ENCODE measurements at regions of chr7 and their contacts with region 1.

Region 1: GRCh38 chr7:52482076-52482475 is 553.4 kb upstream of the POM121L12 start:
- DNase-seq: no peak
- ATAC-seq: no peak
- H3K4me3 ChIP-seq: no peak overlapping the region
- H3K27ac ChIP-seq: no peak overlapping the region
- H3K4me1 ChIP-seq: no peaks in the 10 kb centered on the region
- H3K27me3 ChIP-seq: no peaks in the 10 kb centered on the region
- CTCF ChIP-seq: no peak

Region 2: DNA sequence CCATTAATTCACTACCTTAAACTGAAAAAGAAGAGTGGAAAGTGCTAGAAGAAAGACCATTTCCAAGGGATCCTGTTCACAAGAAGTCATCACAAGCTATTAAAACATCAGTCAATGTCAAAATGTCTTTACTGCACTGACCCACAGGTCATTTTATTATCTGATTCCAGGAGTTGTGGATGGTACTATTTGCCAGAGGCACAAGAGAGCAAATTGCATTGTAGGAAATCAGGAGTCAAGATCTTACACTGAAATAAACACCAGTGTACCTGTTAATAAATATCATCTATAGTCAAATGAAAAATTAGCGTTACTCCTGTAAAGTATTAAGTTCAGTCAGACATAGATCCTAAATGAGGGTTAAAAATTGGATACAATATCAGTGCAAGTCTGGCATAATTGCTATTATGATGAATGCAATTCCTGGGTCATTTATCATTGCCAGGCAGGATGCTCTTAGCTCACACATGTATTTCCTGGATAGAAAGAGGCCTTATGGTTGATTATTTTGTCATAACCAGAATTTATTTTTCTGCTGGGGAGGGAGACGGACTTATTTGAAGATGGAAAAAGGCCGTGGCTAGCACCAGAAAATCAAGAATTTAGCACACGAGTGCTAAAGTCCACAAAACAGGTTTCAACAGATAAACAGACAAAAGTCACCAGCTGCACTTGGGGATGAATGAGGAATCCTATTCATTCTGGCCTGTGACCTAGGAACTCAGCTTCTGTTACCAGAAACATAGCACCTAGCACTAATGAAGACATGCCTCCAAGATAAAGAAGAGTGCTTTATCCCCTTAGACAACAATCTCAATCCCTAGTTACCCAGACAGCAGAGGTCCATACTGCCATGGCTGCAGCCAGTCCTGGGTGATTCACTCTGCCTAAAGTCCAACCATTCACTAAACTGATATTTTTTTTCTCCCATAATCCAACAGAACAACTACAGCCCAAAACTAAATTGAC is 129.8 kb before region 1 on chr7:
- intact Hi-C with region 1: no loop called
- DNase-seq: no peak
- ATAC-seq: no peak
- H3K4me3 ChIP-seq: no peak overlapping the region
- H3K27ac ChIP-seq: no peak overlapping the region
- H3K4me1 ChIP-seq: no peaks in the 10 kb centered on the region
- H3K27me3 ChIP-seq: no peaks in the 10 kb centered on the region
- CTCF ChIP-seq: no peak

Region 3: DNA sequence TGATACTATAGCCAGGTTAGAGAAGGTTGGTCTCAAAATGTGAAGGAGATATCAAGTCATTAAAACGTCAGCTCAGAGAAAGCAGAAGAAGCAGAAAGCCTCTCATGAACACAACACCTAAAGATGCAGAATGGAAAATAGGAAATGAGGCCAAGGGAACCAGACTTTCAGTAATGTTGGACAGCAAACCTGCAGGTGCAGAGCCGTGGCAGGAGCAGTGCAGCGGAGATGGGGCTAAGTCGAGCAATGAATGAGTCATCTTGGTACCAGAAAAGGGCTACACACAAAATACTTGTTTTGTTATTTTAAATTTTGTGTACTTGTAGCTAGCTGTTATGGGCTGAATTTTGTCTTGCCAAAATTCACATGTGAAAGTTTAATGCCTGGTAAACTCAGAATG is 73.7 kb after region 1 on chr7:
- intact Hi-C with region 1: loop called in 1 of 10 experiments (anchors 10 kb)
- DNase-seq: no peak
- ATAC-seq: no peak
- H3K4me3 ChIP-seq: no peak overlapping the region
- H3K27ac ChIP-seq: no peak overlapping the region
- H3K4me1 ChIP-seq: no peaks in the 10 kb centered on the region
- H3K27me3 ChIP-seq: no peaks in the 10 kb centered on the region
- CTCF ChIP-seq: no peak